ENCODE measurements at regions of chr13 and their contacts with region 1.

Region 1: GRCh38 chr13:46492946-46493345 is 60.0 kb upstream of the LRCH1 start:
- DNase-seq: peak in 1 of 2 experiments; percentile 72
- H3K4me3 ChIP-seq: no peak overlapping the region
- H3K4me3 Mint-ChIP-seq: no peak overlapping the region
- H3K27ac Mint-ChIP-seq: no peak overlapping the region
- H3K4me1 ChIP-seq: peaks cover 32% of the 10 kb centered on the region
- H3K4me1 Mint-ChIP-seq: peaks cover 36% of the 10 kb centered on the region
- H3K27me3 ChIP-seq: no peaks in the 10 kb centered on the region
- H3K27me3 Mint-ChIP-seq: no peaks in the 10 kb centered on the region
- CTCF ChIP-seq: peak; percentile 63 to 65

Region 2: GRCh38 chr13:46473798-46474197 is 19.1 kb before region 1 on chr13:
- CTCF ChIA-PET with region 1: interaction called, 8 read pairs
- POLR2A ChIA-PET with region 1: no interaction called
- intact Hi-C with region 1: loop called (anchors 1 kb)
- DNase-seq: peak; percentile 60 to 81
- H3K4me3 ChIP-seq: no peak overlapping the region
- H3K4me3 Mint-ChIP-seq: peak overlapping the region; percentile 52
- H3K27ac Mint-ChIP-seq: peak overlapping the region; percentile 80
- H3K4me1 ChIP-seq: peaks cover 38% of the 10 kb centered on the region
- H3K4me1 Mint-ChIP-seq: peaks cover 23% of the 10 kb centered on the region
- H3K27me3 ChIP-seq: no peaks in the 10 kb centered on the region
- H3K27me3 Mint-ChIP-seq: no peaks in the 10 kb centered on the region
- CTCF ChIP-seq: no peak

Region 3: DNA sequence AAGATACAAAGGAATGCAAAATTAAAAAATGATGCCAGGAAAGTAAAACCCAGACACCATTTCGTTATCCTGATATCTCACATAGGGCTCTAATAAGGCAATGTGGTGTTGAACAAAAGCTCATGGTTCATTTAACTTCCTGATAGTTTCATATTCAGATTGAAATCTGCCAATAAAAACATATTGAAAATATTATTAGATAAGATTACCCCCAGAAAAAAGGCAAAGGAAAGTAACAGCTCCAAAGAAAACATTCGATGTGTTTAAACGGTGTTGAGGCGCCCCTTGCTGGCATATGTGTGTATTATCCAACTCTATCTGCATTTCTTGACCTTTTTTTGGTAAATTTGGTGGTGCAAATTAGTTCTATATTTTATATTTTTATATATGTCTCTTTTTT is 228.1 kb after region 1 on chr13:
- CTCF ChIA-PET with region 1: interaction called, 4 read pairs
- POLR2A ChIA-PET with region 1: no interaction called
- intact Hi-C with region 1: loop called (anchors 1 kb)
- DNase-seq: peak in 1 of 2 experiments; percentile 53
- H3K4me3 ChIP-seq: no peak overlapping the region
- H3K4me3 Mint-ChIP-seq: no peak overlapping the region
- H3K27ac Mint-ChIP-seq: no peak overlapping the region
- H3K4me1 ChIP-seq: peaks cover 29% of the 10 kb centered on the region
- H3K4me1 Mint-ChIP-seq: peaks cover 14% of the 10 kb centered on the region
- H3K27me3 ChIP-seq: no peaks in the 10 kb centered on the region
- H3K27me3 Mint-ChIP-seq: no peaks in the 10 kb centered on the region
- CTCF ChIP-seq: peak; percentile 61 to 74

Region 4: DNA sequence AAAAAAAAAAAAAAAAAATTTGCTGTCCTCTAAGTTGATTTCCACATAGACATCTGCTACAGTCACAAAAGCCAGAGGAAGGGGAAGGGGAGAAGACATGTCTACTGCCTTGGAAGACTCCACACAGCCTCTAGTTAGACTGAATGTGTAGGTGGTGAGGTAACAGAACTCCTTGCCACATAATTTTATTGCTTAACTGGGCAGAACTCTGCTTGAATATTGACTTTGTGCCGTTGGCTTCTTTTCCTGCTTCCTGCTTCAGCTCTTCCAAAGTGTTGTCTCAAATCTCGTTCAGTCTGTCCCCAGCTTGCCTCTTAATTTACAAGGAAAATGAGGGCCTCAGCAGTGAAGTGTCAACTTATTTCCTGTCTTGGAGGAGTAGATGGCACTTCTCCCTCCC is 266.9 kb after region 1 on chr13:
- CTCF ChIA-PET with region 1: no interaction called
- POLR2A ChIA-PET with region 1: no interaction called
- intact Hi-C with region 1: loop called (anchors 2 kb)
- DNase-seq: no peak
- H3K4me3 ChIP-seq: no peak overlapping the region
- H3K4me3 Mint-ChIP-seq: no peak overlapping the region
- H3K27ac Mint-ChIP-seq: no peak overlapping the region
- H3K4me1 ChIP-seq: no peaks in the 10 kb centered on the region
- H3K4me1 Mint-ChIP-seq: no peaks in the 10 kb centered on the region
- H3K27me3 ChIP-seq: no peaks in the 10 kb centered on the region; the same call in 1 of the 2 replicates
- H3K27me3 Mint-ChIP-seq: no peaks in the 10 kb centered on the region
- CTCF ChIP-seq: no peak